Left ventricle myocardium superior (tissue), 1 donor: ENCODE measurements at regions of chr6 and their contacts with region 1.

Region 1: DNA sequence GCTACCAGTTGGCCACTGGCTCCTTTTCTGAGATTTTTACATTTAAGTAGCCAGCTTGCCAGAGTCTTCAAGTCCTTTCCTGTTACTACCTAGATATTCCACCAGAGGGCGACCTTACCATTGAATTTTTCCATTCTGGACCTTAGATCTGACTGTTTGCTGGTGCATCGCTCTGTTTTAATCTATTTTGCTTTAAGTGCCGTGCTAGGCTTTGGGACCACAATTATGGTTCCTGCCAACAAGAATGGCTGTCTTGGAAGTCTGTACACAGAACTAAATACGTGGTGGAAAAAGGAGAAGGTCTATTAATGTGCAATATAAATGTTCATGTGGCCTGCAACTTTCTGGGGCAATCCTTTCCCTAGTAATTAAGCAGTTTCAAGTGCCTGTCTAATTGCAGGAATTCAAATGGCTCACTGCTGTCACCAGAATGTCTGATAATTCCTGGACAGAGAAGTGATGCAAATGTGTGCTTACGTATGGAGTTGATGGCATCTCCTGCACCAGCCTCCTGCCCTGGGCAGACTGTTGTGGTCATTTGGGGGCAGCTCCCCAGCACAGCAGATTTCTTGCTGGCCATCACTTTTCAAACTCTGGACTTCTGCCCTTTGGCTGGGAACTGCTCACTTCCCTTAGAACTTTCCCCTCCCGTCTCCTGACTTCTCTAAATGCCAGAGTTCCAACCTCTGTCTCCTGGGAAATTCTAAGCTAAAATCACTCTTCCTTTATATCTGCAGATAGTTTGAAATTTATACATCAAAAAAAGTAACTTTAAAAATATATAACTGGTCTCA is 5.6 kb upstream of the HLA-DOA start:
- DNase-seq: no peak
- ATAC-seq: peak; percentile 72

Region 2: DNA sequence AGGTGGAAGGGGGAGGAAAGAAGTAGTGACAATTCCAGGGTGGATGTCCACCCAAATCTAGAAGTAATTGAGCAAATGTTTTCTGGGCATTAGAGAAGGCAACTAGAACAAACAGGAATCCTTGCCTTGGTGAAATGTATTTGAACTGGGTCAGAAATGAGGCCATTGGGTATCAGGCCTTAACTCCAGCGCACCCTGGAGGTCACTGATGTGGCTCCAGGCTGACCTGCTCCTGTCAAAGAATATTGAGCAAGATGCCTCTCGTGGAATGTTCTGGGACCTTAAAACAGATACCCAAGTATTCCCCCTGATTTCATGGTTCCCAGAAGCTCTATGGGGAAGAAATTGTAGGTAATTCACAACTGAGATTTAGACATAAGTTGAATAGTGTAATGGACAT is 67.7 kb after region 1 on chr6:
- intact Hi-C with region 1: loop called (anchors 5 kb)
- DNase-seq: peak; percentile 62
- ATAC-seq: peak; percentile 31

Region 3: DNA sequence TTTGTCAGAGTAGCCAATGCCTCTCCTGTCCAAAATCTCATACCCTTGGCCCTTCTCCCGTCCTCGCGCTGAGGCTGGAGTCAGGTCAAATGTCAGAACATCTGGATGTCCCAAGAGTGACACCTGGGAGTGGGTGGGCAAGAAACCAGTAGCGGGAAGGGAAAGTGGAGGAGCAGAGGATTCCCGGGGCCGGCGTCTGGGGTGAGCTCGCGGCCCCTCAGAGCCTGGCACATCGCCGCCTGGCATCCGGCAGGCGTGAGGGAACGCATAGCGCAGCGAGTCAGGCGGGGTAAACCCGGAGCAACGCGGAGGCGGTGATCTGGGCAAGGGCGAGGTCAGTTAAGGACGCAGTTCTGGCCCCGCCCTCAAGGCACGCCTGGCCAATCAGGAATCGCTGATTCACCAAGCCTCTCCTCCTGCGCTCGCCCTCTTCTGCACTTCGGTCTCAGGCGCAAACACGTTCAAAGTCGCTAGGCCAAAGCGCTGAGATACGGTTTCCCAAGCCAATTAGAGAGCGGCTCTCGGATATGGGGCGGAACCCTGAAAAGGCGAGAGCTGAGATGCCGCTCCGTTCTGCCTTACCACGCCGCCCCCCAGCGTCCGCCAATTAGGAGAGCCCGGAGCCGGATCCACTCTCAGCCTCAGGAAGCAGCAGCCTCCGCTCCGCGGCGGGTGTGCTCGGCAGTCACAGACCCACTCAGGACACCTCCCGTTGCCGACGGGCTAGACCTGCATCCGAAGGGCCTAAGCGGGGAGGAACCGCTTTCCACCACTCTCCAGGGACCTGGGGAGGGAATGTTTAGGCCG is 234.1 kb after region 1 on chr6:
- intact Hi-C with region 1: loop called (anchors 10 kb)
- DNase-seq: peak; percentile 97
- ATAC-seq: peak; percentile 96